Activated T-helper 1 cell treated with anti-CD3 and anti-CD28 coated beads, Interleukin-12 subunit alpha, Interleukin-12 subunit beta, Interleukin-2, Interleukin-4 antibody, amounts not matched to agents 30 ng/mL and 10 ng/mL and 1 ng/mL, durations not matched to agents 14 hours and 24 hours and 36 hours (primary cell): ENCODE measurements at regions of chr17 and their contacts with region 1.

Region 1: DNA sequence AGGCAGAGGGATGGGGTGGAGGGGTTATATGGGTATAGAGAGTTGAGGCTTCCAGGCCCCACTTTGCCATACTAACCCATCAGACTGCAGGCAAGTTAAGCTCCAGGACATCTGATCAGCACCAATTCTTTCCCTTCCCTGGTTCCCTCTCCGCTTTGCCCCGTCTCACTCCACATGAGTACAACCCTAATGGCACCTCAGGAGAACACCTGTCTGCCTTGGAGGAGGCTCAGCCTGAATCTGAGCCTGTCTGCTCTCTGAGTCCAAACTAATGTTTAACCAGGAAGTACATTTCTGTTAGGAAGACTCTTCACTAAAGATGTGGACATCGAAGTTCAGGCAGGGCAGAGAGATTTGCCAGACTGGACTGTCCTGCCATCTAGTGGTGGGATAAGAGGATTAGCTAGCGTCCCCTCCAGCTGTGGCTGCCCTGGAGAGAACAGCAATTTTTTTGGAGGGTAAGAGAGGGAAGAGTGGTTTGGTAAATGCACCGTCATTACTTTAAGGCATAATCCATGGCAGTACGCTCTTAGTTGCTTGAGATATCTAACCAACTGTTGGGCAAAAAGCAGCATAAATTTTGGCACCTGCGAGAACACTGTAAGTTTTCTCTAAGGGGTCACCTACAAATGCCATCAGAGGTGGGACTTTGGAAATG is 29.2 kb upstream of the LRRC75A start:
- DNase-seq: peak; percentile 45
- H3K4me3 Mint-ChIP-seq: no peak overlapping the region
- H3K27ac Mint-ChIP-seq: no peak overlapping the region
- H3K4me1 Mint-ChIP-seq: peaks cover 12% of the 10 kb centered on the region
- H3K27me3 Mint-ChIP-seq: peaks cover 29% of the 10 kb centered on the region

Region 2: DNA sequence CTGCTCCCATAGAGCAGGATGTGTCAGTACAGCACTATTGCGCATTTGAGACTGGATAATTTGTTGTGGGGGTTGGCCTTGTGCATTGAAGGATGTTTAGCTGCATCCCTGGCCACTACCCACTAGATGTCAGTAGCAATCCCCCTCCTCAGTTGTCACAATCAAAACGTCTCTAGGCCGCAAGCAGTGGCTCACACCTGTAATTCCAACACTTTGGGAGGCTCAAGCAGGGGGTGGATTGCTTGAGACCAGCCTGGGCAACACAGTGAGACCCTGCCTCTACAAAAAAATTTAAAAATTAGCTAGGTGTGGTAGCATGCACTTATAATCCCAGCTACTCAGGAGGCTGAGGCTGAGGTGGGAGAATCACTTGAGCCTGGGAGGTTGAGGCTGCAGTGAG is 216.4 kb before region 1 on chr17:
- intact Hi-C with region 1: loop called (anchors 5 kb)
- DNase-seq: no peak
- H3K4me3 Mint-ChIP-seq: no peak overlapping the region
- H3K27ac Mint-ChIP-seq: no peak overlapping the region
- H3K4me1 Mint-ChIP-seq: peaks cover 4% of the 10 kb centered on the region
- H3K27me3 Mint-ChIP-seq: no peaks in the 10 kb centered on the region

Region 3: DNA sequence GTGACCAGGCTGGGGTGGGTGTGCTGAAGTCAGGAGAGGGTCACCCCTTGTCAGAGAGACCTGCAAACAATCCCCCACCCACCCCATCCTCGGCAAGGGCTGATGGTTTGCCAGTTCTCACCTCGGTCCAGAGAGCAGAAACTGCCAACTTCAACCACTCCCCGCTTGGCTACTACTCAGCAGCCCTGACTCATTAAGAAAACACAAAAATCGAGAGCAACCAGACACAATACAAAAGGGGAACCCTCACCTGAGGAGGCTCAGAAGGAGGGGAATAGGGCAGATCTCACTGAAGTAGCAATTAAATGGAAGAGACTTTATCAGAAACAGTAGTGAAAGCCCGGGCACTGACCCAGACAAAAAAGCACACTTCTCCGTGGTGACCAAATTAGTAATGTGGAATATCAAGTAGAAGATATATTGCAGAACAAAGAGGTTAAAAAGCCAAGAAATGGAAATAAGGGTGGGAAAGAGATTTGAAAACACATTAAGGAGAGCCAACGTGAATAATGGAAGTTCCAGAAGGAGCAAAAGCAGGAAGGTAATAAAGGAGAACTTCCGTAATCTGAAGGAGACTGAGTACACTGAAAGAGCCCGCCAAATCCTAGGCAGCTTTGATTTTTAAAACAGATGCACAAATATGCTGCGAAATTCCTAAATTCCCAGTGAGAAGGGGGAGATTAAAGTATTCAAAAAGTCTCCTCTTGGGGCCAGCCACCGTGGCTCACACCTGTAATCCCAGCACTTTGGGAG is 191.5 kb before region 1 on chr17:
- intact Hi-C with region 1: no loop called
- DNase-seq: no peak
- H3K4me3 Mint-ChIP-seq: no peak overlapping the region
- H3K27ac Mint-ChIP-seq: no peak overlapping the region
- H3K4me1 Mint-ChIP-seq: no peaks in the 10 kb centered on the region
- H3K27me3 Mint-ChIP-seq: no peaks in the 10 kb centered on the region

Region 4: DNA sequence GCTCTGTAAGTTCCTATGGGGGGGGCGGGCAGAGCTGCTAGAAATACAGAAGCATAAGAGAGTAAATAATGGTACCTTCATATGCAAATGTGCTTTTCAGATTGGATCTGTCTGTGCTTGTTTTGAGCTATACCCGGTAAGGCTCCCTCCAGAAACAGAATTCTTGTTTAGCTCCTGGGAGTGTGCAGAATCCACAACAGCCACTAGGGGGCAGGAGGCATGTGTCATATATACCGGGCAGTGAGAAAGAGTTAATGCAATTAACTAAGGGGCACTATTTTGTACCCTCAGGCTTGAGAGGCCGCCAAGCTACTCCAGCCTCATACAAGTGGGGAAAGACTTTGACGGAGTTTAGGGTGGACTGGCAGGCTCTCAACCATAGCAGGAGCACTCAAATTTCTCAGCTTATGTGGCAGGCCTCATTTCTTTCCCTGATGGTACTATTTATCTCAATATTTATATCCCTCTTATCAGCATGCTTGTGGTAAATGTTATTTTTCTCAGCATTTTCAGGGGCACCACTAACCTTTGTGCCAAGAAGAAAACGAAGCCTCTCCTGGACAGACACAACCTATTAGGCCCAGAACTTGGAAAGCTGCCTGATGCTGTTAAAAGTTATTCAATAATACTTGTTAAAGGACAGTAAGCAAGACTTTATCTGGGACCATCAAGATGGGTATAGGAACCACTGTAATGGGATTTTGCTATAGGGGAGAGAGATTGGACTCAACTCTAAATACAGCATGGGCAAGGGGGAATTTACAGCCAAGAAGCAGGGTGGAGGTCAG is 157.3 kb before region 1 on chr17:
- intact Hi-C with region 1: loop called (anchors 1 kb)
- DNase-seq: peak; percentile 59
- H3K4me3 Mint-ChIP-seq: no peak overlapping the region
- H3K27ac Mint-ChIP-seq: no peak overlapping the region
- H3K4me1 Mint-ChIP-seq: no peaks in the 10 kb centered on the region
- H3K27me3 Mint-ChIP-seq: peaks cover 3% of the 10 kb centered on the region

Region 5: DNA sequence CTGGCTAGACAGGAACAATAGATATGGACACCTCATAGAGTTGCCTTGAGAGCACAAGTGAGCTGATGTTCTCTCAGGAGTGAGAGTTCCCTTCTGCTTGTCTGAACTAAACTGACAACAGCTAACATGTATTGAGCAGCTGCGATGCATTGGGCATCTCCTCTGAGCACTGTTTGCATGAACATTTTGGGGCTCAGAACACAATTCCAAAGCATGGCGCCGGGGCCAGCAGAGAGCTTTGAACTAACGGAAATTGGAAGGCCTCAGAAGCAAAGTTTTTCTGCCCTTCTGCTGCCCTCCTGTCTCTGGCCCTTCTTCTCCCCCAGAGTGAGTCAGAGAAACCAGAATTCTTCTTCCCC is 67.7 kb before region 1 on chr17:
- intact Hi-C with region 1: loop called (anchors 1 kb)
- DNase-seq: no peak
- H3K4me3 Mint-ChIP-seq: no peak overlapping the region
- H3K27ac Mint-ChIP-seq: peak overlapping the region; percentile 52
- H3K4me1 Mint-ChIP-seq: peaks cover 23% of the 10 kb centered on the region
- H3K27me3 Mint-ChIP-seq: no peaks in the 10 kb centered on the region